ENCODE measurements at regions of chr14 and their contacts with region 1.

Region 1: GRCh38 chr14:50003213-50004031 is 110.5 kb downstream of the ARF6 start:
- DNase-seq: peak; percentile 95
- H3K4me3 Mint-ChIP-seq: peak overlapping the region; percentile 83
- H3K27ac Mint-ChIP-seq: peak overlapping the region; percentile 96
- H3K4me1 Mint-ChIP-seq: peaks cover 58% of the 10 kb centered on the region
- H3K27me3 Mint-ChIP-seq: no peaks in the 10 kb centered on the region

Region 2: DNA sequence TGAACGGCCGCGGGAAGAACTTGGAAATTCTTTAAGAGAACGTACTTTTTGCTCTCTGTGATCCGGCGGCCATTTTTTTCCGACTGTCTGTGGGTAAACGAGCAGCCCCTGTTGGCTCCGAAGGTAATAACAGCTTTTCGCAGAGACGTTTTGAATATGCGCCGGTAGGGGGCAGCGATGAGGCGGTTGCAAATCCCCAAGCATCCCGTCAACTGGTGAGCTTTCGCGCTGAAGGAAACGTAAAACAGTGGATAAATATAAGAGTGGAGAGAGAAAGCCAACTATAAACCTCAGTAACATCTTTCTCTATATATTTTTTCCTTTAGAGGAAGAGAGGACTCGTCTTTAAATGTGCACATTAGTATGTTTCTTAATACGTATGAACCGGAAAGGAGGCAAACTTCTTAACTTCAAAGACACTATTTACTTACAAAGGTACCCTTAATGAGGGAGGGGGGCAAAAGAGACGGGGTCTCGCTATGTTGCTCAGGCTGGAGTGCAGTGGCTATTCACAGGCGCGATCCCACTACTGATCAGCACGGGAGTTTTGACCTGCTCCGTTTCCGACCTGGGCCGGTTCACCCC is 141.2 kb before region 1 on chr14:
- intact Hi-C with region 1: loop called (anchors 1 kb)
- DNase-seq: peak; percentile 95
- H3K4me3 Mint-ChIP-seq: no peak overlapping the region
- H3K27ac Mint-ChIP-seq: no peak overlapping the region
- H3K4me1 Mint-ChIP-seq: peaks cover 18% of the 10 kb centered on the region
- H3K27me3 Mint-ChIP-seq: peaks cover 4% of the 10 kb centered on the region

Region 3: DNA sequence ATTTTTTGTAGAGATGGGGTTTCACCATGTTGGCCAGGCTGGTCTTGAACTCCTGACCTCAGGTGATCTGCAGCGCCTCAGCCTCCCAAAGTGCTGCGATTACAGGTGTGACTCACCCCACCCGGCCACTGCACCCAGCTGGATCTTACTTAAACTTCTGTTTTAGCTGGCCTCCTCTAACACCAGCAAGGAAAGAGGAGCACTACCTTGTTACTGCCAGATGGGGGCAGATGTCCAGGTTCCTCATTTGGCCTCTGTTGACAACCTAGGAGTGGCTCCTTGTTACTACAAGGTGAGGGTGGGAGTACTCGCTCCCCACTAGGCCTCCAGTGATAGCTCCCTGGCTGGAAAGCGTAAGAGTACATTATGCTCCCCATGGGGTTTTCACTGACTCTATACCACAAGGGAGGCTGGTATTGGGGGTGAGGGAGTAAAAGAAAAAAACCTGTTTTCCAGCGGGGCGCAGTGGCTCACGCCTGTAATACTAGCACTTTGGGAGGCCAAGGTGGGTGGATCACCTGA is 123.7 kb before region 1 on chr14:
- intact Hi-C with region 1: no loop called
- DNase-seq: peak; percentile 87
- H3K4me3 Mint-ChIP-seq: no peak overlapping the region
- H3K27ac Mint-ChIP-seq: peak overlapping the region; percentile 66
- H3K4me1 Mint-ChIP-seq: peaks cover 25% of the 10 kb centered on the region
- H3K27me3 Mint-ChIP-seq: no peaks in the 10 kb centered on the region

Region 4: DNA sequence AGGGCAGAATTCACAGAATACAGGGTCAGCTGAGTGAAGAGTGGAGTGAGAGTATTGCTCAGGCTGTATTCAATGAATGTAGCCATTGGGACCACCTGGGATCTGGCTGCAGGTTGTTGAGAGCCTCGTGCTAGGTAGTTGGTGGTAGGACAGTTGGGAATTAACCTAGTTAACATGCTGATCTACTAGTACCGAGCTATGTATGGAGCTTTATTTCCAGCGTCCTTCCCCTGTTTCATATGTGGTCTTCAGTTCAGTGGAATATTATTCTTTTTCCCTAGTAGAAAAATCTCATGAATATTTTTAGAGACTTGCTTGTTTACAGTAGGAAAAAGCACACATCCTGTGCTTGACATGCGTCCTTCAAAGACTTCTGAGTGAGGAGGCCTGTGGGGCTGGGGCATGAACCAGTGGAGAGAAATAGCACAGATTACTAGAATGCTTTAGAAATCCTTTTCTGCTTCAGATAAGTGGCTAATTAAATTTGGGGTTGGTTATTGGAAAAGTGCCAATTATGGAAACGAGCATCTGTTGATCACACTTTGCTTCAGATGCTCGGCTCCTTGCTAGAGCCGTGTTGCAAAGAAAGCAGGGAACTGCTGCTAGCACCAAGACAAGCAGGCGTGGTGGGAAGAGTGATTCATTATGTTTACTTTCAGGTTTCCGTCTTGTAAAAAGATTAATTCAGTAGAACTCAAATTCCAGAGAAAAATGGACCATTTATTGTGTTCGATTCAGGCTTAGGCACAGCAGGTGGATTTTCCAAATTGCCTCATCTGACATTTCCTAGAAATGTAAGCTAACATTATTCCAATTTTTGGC is 56.9 kb before region 1 on chr14:
- intact Hi-C with region 1: loop called (anchors 1 kb)
- DNase-seq: peak; percentile 77
- H3K4me3 Mint-ChIP-seq: peak overlapping the region; percentile 58
- H3K27ac Mint-ChIP-seq: peak overlapping the region; percentile 85
- H3K4me1 Mint-ChIP-seq: peaks cover 62% of the 10 kb centered on the region
- H3K27me3 Mint-ChIP-seq: no peaks in the 10 kb centered on the region

Region 5: DNA sequence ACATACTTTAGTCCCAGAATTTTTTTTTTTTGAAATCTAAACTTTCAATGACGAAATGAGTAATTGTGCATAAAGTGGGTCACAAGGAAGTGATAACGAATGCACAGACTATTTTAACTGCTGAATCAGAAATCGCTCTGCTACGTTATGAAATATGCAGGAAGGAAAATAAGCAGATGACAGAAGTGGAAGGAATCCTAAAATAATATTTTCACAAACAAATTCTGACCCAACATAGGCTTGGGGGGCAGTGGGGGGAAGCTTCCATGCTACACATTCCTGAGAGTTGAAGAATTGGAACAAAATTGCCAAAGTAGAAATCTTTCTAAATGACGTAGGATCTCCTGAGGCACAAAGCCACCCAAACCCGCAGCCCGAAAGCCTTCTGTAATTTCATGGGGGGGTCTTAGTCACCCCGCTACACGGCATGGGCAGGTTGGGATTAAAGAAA is 20.9 kb before region 1 on chr14:
- intact Hi-C with region 1: loop called (anchors 1 kb)
- DNase-seq: no peak
- H3K4me3 Mint-ChIP-seq: no peak overlapping the region
- H3K27ac Mint-ChIP-seq: peak overlapping the region; percentile 78
- H3K4me1 Mint-ChIP-seq: peaks cover 59% of the 10 kb centered on the region
- H3K27me3 Mint-ChIP-seq: no peaks in the 10 kb centered on the region

Region 6: GRCh38 chr14:49992901-49993335 is 10.5 kb before region 1 on chr14:
- intact Hi-C with region 1: no loop called
- DNase-seq: peak; percentile 70
- H3K4me3 Mint-ChIP-seq: peak overlapping the region; percentile 70
- H3K27ac Mint-ChIP-seq: peak overlapping the region; percentile 93
- H3K4me1 Mint-ChIP-seq: peaks cover 42% of the 10 kb centered on the region
- H3K27me3 Mint-ChIP-seq: no peaks in the 10 kb centered on the region

Region 7: DNA sequence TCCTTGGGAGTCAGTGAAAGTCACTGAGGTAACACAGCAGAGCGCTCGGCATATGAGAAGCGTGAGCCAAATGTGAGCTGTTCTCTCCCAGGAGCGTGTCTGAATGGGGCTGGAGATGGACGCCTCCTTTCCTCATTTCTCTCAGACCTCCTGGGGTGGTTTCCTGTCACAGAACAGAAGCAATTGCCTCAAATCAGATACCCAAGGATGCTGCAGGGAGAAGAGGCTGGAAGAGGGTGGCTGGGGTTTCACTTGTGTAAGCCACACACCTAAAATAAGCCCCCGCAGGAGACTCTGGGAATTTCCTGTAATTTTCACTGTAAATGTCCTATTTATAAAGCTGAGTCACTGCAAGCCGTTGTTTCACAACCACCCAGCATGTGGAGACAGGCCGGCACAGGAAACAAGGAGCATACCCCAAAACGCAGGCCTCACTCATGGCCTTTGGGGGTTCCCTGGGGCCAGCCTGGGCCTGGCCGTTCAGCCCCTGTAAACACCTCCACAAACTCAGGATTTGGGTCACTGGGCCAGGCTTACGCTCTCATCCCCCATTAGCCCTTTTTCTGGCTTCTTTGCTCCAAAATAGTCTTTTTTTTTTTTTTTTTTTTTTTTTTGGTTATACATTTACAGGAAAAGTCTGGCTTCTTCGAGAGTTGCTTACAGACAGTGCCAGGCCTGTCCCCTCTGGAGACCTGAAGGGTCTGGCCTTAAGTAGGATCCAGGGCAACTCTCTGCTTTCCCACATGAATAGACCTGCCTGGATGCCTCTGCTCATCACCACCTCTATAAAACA is 57.6 kb after region 1 on chr14:
- intact Hi-C with region 1: loop called (anchors 1 kb)
- DNase-seq: peak; percentile 83
- H3K4me3 Mint-ChIP-seq: peak overlapping the region; percentile 85
- H3K27ac Mint-ChIP-seq: peak overlapping the region; percentile 98
- H3K4me1 Mint-ChIP-seq: peaks cover 76% of the 10 kb centered on the region
- H3K27me3 Mint-ChIP-seq: no peaks in the 10 kb centered on the region

Region 8: DNA sequence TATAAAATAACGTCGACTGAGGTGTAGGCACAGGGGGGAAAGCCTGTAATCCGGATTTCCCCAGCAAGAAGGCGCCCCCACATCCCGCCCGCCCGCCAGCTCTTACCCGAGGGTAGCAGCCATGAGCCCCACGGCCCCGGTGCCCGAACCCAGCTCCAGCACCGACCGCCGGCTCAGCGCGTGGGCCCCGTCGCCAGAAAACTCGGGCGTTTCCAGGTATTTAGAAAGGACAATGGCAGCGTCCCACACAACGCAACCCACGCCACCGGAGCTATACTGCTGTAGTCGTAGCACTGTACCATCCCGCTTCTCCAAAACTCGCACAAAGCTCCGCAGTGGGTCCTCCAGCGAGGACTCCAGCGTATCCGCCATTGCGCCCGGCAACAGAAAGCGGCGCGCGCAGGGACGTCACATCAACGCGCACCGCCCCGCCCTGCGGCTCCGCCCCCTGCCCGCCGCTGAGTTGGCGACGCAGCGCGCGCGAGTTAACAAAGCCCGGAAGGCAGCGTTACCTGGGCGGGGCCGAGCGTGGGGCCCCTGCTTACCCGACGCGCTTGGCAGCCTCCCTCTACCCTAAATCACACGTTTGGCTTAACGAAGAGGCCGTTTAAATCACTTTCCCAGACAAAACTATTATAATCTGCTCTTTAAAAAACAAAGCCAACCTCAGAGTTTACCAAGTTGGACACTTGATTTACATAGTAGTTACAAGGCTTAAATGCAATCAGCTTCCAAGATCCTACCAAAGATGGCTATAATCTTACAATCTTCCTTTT is 112.9 kb after region 1 on chr14 and contains the start of gene VCPKMT:
- intact Hi-C with region 1: no loop called
- DNase-seq: peak; percentile 99
- H3K4me3 Mint-ChIP-seq: peak within 1 kb of the TSS; percentile 97
- H3K27ac Mint-ChIP-seq: peak within 1 kb of the TSS; percentile 99
- H3K4me1 Mint-ChIP-seq: peaks cover 20% of the 10 kb centered on the region
- H3K27me3 Mint-ChIP-seq: no peaks in the 10 kb centered on the region
- total RNA-seq, gene VCPKMT: 13.9 and 14.3 TPM in 2 replicates

Region 9: GRCh38 chr14:50186107-50186506 is 182.7 kb after region 1 on chr14:
- intact Hi-C with region 1: no loop called
- DNase-seq: no peak
- H3K4me3 Mint-ChIP-seq: no peak overlapping the region
- H3K27ac Mint-ChIP-seq: no peak overlapping the region
- H3K4me1 Mint-ChIP-seq: no peaks in the 10 kb centered on the region
- H3K27me3 Mint-ChIP-seq: no peaks in the 10 kb centered on the region

Region 10: GRCh38 chr14:50231475-50232275 is 228.3 kb after region 1 on chr14 and contains the start of gene SOS2:
- intact Hi-C with region 1: loop called (anchors 5 kb)
- DNase-seq: peak; percentile 95
- H3K4me3 Mint-ChIP-seq: peak within 1 kb of the TSS; percentile 92
- H3K27ac Mint-ChIP-seq: peak within 1 kb of the TSS; percentile 90
- H3K4me1 Mint-ChIP-seq: peaks cover 37% of the 10 kb centered on the region
- H3K27me3 Mint-ChIP-seq: no peaks in the 10 kb centered on the region
- total RNA-seq, gene SOS2: 17.7 and 17.8 TPM in 2 replicates